ENCODE measurements at regions of chr11 and their contacts with region 1.

Region 1: GRCh38 chr11:2655834-2656622 is 43.8 kb downstream of the KCNQ1OT1 start:
- DNase-seq: peak; percentile 24
- H3K4me3 ChIP-seq: no peak overlapping the region
- CTCF ChIP-seq: no peak

Region 2: GRCh38 chr11:2559527-2560311 is 96.3 kb before region 1 on chr11:
- in situ Hi-C with region 1: loop called (anchors 5 kb)
- DNase-seq: no peak
- H3K4me3 ChIP-seq: no peak overlapping the region
- CTCF ChIP-seq: no peak

Region 3: GRCh38 chr11:2590965-2591754 is 64.9 kb before region 1 on chr11:
- in situ Hi-C with region 1: no loop called
- DNase-seq: no peak
- H3K4me3 ChIP-seq: no peak overlapping the region
- CTCF ChIP-seq: no peak

Region 4: DNA sequence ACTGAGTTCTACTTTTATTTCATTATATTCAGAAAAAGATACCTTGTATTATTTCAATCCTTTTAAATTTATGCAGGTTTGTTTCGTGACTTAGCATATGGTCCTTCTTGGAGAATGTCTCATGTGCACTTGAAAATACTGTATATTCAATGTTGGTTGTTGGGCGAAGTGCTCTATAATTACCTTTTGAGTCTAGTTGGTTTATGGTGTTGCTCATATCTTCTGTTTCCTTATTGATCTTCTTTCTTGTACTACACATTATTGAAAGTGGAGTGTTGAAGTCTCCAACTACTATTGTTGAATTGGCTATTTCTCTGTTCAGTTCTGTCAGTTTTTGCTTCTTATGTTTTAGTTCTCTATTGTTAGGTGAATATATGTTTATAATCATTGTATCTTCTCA is 46.7 kb before region 1 on chr11:
- in situ Hi-C with region 1: loop called (anchors 5 kb)
- DNase-seq: no peak
- H3K4me3 ChIP-seq: no peak overlapping the region
- CTCF ChIP-seq: no peak

Region 5: DNA sequence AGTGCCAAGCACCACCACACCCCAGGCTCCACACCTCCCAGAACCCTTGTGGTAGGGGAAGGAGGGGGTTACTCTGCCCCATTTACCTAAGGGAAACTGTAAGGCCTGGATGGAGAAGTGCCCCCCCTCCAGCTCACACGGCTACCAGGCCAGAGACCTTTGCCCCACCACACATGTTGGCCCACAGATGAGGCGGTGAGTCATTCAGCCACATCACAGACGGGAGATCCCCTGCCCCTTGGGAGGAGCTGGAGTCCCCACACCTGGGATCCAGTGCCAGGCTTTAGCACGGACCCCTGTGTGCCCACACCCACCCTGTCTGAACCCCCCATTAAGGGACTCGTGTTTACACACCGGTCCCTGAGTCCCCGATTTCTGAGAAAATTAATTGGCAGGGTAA is 204.6 kb after region 1 on chr11:
- in situ Hi-C with region 1: loop called (anchors 25 kb)
- DNase-seq: no peak
- H3K4me3 ChIP-seq: no peak overlapping the region
- CTCF ChIP-seq: no peak